Activated CD4-positive, alpha-beta T cell treated with anti-CD3 and anti-CD28 coated beads for 36 hours (primary cell): ENCODE measurements at regions of chr1 and their contacts with region 1.

Region 1: DNA sequence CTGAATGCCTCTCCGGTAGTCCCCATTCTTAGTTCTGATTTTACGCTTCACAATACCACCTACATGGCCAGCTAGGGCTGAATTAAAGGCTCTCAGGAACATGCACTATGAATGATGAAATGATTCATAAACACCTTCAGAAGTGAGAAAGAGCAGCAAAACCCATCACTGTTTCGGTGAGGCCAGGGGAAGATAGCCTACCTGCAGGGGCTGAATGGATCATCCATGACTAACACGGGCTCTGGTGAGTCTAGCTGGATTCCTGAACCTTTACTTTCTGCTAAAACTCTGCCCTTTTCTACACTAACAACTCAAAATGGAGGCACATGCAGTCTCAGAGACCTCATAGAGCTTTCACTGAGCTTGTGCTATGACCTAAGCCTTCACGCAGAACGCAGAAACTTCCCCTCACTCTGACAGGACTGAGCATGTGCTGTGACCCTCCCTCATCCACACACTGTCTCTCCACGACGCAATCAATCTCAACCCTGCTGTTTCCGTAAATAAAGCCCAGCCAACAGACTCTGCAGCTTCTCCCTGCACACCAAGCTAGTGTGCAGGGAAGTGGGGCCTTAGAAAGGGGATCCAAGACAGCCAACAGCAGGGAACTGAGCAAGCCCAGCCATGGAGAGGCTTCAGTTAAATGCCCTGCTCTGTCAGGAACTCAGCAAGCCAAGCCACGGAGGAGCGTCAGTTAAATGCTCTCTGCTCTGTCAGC is 207.8 kb downstream of the SLC45A1 start:
- DNase-seq: peak; percentile 85
- ATAC-seq: peak; percentile 94
- H3K4me3 Mint-ChIP-seq: no peak overlapping the region
- H3K27ac Mint-ChIP-seq: no peak overlapping the region
- H3K4me1 Mint-ChIP-seq: peaks cover 24% of the 10 kb centered on the region
- H3K27me3 Mint-ChIP-seq: no peaks in the 10 kb centered on the region

Region 2: GRCh38 chr1:8396786-8397406 is 128.8 kb before region 1 on chr1:
- CTCF ChIA-PET with region 1: no interaction called
- POLR2A ChIA-PET with region 1: interaction called, 3 read pairs
- intact Hi-C with region 1: loop called (anchors 1 to 2 kb)
- DNase-seq: peak; percentile 68
- ATAC-seq: peak; percentile 84
- H3K4me3 Mint-ChIP-seq: peak overlapping the region; percentile 25
- H3K27ac Mint-ChIP-seq: peak overlapping the region; percentile 81
- H3K4me1 Mint-ChIP-seq: peaks cover 72% of the 10 kb centered on the region
- H3K27me3 Mint-ChIP-seq: no peaks in the 10 kb centered on the region

Region 3: GRCh38 chr1:8423650-8424538 is 101.8 kb before region 1 on chr1:
- CTCF ChIA-PET with region 1: interaction called, 3 read pairs
- POLR2A ChIA-PET with region 1: interaction called, 7 read pairs
- intact Hi-C with region 1: loop called (anchors 1 to 2 kb)
- DNase-seq: peak; percentile 77
- ATAC-seq: peak; percentile 66
- H3K4me3 Mint-ChIP-seq: peak overlapping the region; percentile 84
- H3K27ac Mint-ChIP-seq: peak overlapping the region; percentile 97
- H3K4me1 Mint-ChIP-seq: peaks cover 42% of the 10 kb centered on the region
- H3K27me3 Mint-ChIP-seq: no peaks in the 10 kb centered on the region

Region 4: DNA sequence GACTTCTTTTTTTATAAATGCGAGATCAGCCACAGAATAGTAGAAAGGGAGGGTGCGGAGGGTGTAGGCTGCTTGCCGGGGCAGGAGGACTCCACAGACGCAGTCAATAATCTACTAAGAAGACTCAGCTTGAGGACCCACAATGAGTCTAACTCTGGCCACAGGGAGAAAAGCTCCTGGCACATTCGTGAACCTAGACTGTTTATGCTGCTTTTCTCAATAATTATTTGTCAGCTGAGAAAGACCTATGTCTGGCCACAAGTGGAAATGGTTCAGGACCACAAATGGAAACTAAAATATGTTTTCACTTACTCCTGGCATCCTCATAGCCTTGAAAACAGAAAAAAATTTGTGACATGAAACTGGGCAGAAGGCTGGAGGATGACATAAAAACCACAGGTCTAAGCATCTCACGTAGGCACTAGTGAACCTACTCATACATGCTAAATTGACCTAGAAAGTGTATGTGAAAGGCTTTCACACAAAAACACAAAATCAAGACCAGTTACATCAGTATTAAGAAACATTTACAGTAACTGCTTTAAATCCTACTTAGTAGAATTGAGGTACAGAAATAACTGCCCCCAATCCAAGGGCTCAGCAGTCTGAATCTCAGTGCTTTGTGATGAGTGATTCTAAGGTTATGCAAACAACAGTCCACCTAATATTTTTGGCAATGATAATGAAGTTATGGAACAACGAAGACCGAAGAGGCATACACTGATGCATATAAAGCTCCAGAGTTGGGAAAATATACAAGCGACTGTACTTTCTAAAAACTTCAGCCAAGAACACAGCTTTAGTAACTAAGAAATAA is 48.3 kb before region 1 on chr1:
- CTCF ChIA-PET with region 1: interaction called, 3 read pairs
- POLR2A ChIA-PET with region 1: interaction called, 3 read pairs
- intact Hi-C with region 1: loop called (anchors 1 to 5 kb)
- DNase-seq: peak; percentile 45
- ATAC-seq: peak; percentile 77
- H3K4me3 Mint-ChIP-seq: no peak overlapping the region
- H3K27ac Mint-ChIP-seq: peak overlapping the region; percentile 85
- H3K4me1 Mint-ChIP-seq: peaks cover 49% of the 10 kb centered on the region
- H3K27me3 Mint-ChIP-seq: no peaks in the 10 kb centered on the region

Region 5: DNA sequence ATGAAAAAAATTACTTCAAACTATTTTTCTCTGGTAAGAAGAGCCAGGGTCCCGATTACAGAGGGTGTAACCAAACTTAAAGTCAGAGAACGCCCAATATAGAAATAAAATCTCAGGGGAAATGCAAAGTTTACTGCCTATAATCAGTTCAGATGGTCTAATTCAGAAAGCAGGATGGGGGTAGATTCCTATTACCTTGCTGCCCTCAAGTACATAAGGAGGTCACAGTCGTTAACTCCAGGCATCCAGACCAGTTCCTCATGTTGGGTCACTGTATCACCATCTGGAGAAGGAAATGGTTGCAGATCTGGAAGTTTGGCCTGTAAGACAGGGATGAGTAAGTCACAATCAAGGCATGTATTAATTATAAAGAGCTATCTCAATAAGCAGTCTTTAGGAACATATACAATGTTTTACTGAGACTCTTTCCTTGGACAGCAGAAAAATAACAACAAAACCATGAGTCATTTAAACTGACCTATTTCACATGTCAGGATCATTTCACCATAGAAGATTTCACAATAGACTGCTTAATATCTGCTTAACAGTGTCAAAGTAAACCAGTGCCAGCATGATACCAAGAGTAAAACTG is 28.4 kb before region 1 on chr1:
- CTCF ChIA-PET with region 1: no interaction called
- POLR2A ChIA-PET with region 1: no interaction called
- intact Hi-C with region 1: loop called (anchors 1 to 2 kb)
- DNase-seq: no peak
- ATAC-seq: no peak
- H3K4me3 Mint-ChIP-seq: no peak overlapping the region
- H3K27ac Mint-ChIP-seq: no peak overlapping the region
- H3K4me1 Mint-ChIP-seq: peaks cover 29% of the 10 kb centered on the region
- H3K27me3 Mint-ChIP-seq: no peaks in the 10 kb centered on the region

Region 6: DNA sequence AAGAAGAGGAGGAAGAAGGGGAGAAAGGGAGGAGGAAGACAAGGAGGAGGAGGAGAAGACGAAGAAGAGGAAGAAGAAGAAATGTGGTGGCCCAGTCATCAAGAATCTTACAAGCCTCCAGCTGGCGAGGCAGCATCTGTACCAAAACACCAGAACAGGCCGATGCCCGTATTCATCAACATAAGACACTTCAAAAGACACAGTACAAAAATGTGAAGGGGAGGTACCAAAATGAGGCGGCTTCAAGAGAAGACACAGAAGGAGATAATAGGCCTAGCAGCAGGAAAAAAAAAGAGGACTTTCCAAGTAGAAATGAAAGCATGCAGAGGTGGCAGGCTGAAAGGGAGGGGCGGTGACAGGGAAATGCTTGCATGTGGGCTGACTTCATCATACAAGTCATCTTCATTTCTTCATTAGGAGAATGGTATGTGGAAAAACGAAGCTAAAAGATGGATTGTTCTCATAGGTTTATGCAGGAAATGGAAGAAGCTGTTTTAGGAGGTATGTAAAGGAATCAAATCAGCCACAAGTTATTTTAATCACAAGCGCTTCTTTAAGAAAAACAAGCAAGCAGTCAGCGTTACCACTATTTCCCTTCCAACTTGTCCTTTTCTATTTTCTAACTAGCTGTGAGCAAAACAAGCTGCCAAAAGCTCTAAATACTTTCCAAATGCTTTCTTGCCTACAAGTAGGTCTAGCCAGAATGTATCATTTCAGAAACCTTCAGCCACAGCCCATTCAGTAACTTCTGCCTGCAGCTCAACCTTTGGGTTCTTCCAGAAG is 15.5 kb before region 1 on chr1:
- CTCF ChIA-PET with region 1: interaction called, 16 read pairs
- POLR2A ChIA-PET with region 1: interaction called, 6 read pairs
- intact Hi-C with region 1: loop called (anchors 1 kb)
- DNase-seq: peak; percentile 71
- ATAC-seq: peak; percentile 82
- H3K4me3 Mint-ChIP-seq: peak overlapping the region; percentile 63
- H3K27ac Mint-ChIP-seq: peak overlapping the region; percentile 93
- H3K4me1 Mint-ChIP-seq: peaks cover 49% of the 10 kb centered on the region
- H3K27me3 Mint-ChIP-seq: no peaks in the 10 kb centered on the region

Region 7: GRCh38 chr1:8554956-8555534 is 29.3 kb after region 1 on chr1:
- CTCF ChIA-PET with region 1: interaction called, 3 read pairs
- POLR2A ChIA-PET with region 1: interaction called, 11 read pairs
- intact Hi-C with region 1: loop called in 1 of 2 experiments (anchors 1 kb)
- DNase-seq: peak; percentile 41
- ATAC-seq: peak; percentile 76
- H3K4me3 Mint-ChIP-seq: no peak overlapping the region
- H3K27ac Mint-ChIP-seq: no peak overlapping the region
- H3K4me1 Mint-ChIP-seq: peaks cover 45% of the 10 kb centered on the region
- H3K27me3 Mint-ChIP-seq: no peaks in the 10 kb centered on the region

Region 8: DNA sequence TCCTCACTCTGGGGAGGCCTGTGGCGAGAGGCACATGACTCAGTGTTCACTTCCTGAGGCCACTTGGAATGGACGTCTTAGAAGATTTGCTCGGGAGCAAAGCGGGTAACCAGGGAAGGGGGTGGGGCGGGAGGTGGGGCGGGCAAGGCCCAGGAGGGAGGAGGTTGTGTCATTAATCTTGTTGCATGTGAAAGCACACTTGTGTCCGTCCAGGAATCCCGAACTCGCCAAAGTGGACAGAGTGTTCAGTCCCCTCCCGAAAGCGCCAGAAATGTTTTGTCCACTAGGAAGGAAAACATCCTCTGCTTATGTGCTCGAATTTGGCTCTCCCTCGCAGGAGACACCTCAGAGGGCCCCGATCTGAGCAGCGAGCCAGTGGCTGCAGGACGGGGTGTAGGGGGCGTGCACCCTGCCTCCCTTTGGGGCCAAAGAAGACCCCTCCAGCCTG is 851.2 kb after region 1 on chr1:
- CTCF ChIA-PET with region 1: no interaction called
- POLR2A ChIA-PET with region 1: no interaction called
- intact Hi-C with region 1: no loop called
- DNase-seq: no peak
- ATAC-seq: no peak
- H3K4me3 Mint-ChIP-seq: no peak overlapping the region
- H3K27ac Mint-ChIP-seq: no peak overlapping the region
- H3K4me1 Mint-ChIP-seq: no peaks in the 10 kb centered on the region
- H3K27me3 Mint-ChIP-seq: no peaks in the 10 kb centered on the region